ENCODE measurements at regions of chr1 and their contacts with region 1.

Region 1: GRCh38 chr1:27044613-27045151 is 32.0 kb upstream of the TENT5B start:
- DNase-seq: peak; percentile 89

Region 2: DNA sequence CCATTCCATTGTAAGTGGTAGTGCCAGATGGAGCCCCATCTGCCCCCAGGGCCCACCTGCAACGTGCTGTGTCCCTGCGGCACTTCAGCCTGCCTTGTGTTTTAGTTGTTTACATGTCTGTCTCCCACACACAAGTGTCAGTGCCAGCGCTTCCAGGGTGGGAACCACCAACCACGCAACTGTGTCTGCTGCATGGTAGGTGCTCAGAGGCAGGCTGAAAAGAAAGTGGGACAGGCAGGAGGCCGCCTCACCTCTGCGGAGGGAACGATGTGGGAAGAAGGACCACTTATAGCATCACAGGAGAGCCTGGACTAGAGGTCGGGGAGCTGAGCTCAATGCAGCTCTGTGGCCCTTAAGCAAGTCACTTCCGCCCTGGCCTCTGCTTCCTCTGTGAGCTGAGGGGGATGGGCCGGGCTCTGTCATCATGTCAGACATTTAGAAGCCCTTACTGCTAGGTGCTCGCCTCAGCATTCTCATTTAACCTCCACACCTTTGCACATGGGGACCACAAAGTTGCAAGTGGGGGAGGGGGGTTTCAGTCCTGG is 92.4 kb after region 1 on chr1:
- in situ Hi-C with region 1: loop called (anchors 5 kb)
- DNase-seq: peak; percentile 71

Region 3: DNA sequence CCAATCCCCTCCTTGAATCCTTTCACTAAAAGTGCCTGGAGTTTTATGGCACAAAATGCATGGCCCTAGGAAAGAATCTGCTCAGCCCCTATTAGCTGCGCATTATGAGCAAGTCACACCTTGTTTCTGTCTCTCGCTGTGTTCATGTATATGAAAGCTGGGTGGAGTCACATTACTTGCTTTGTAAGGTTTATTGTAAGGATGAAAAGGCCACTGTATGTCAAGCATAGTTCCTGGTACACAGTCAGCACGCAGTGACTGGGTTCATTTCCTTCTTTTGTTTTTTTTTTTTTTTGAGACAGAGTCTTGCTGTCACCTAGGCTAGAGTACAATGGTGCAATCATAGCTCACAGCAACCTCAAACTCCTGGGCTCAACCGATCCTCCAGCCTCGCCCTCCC is 116.9 kb after region 1 on chr1:
- in situ Hi-C with region 1: no loop called
- DNase-seq: no peak

Measured in G401 (cell line).